ENCODE measurements at regions of chr4 and their contacts with region 1.

Region 1: GRCh38 chr4:14529653-14530052 is 472.6 kb upstream of the CPEB2 start:
- DNase-seq: no peak
- H3K4me3 ChIP-seq: no peak overlapping the region
- H3K27ac ChIP-seq: no peak overlapping the region
- H3K4me1 ChIP-seq: no peaks in the 10 kb centered on the region
- H3K27me3 ChIP-seq: no peaks in the 10 kb centered on the region
- CTCF ChIP-seq: no peak

Region 2: GRCh38 chr4:14562901-14563300 is 33.2 kb after region 1 on chr4:
- CTCF ChIA-PET with region 1: no interaction called
- dilution Hi-C with region 1: loop called (anchors 5 kb)
- in situ Hi-C with region 1: no loop called
- intact Hi-C with region 1: no loop called
- DNase-seq: no peak
- H3K4me3 ChIP-seq: no peak overlapping the region
- H3K27ac ChIP-seq: no peak overlapping the region
- H3K4me1 ChIP-seq: no peaks in the 10 kb centered on the region
- H3K27me3 ChIP-seq: peaks cover 8% of the 10 kb centered on the region
- CTCF ChIP-seq: no peak

Region 3: DNA sequence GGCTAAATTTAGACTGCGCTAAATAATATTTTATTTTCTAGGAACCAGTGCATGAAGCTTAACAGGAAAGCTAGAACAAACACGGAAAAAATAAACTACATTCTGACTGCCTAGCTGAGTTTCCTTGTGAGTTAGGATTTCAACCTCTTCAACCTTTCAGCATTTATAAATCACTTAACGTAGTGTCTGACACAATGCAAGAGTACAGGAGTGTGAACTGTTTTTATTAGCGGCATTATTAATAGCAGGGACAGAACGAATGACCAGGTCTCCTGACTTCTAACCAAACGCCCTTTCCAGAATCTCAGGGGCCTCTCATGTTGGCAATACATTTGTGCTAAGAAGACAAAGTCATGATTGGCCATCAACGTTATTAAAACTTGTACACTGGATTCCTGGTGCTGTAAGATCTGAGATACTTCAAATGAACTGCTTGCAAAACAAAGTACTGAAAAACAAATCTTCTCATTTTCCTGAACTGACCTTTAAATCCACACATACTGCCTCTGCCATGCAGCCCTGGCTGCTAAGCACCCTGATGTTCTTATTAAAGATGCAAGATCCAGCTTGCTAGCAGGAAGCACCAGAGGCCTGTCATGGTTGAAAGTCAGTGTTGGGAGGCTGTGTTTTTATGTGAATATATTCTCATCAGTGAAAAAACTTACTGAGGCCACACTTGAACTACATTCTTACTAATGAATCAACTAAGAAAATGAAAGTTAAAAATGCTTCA is 92.2 kb after region 1 on chr4:
- CTCF ChIA-PET with region 1: no interaction called
- dilution Hi-C with region 1: no loop called
- in situ Hi-C with region 1: no loop called
- intact Hi-C with region 1: no loop called
- DNase-seq: no peak
- H3K4me3 ChIP-seq: no peak overlapping the region
- H3K27ac ChIP-seq: no peak overlapping the region
- H3K4me1 ChIP-seq: no peaks in the 10 kb centered on the region
- H3K27me3 ChIP-seq: no peaks in the 10 kb centered on the region
- CTCF ChIP-seq: no peak